G401 (cell line): ENCODE measurements at regions of chr1 and their contacts with region 1.

Region 1: DNA sequence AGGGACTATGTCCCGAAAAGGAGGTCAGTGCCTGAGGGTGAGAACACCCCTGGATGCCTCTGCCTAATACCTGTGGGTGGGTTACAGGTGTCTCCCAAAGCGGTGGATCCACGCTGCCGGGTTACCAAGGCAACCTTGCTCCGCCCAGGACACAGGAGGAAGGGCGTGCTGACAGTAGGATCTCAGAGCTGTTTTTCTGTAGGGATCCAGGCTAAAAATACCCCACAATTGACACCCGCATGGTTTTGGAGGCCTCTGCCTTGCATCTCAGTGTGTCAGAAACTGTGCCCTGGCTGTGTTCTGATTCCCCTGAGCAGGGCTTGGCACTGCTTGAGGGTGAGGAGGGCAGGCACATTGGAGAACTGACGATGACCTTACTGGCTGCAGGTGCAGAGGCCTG is 118.0 kb downstream of the IER5 start:
- DNase-seq: peak; percentile 49

Region 2: GRCh38 chr1:181424786-181425403 is 218.4 kb after region 1 on chr1:
- in situ Hi-C with region 1: loop called (anchors 25 kb)
- DNase-seq: peak; percentile 82